ENCODE measurements at regions of chr13 and their contacts with region 1.

Region 1: GRCh38 chr13:95624020-95624419 is 20.5 kb downstream of the DZIP1 start:
- DNase-seq: peak; percentile 68
- H3K4me3 ChIP-seq: no peak overlapping the region
- H3K27ac ChIP-seq: no peak overlapping the region
- H3K4me1 ChIP-seq: no peaks in the 10 kb centered on the region
- H3K27me3 ChIP-seq: no peaks in the 10 kb centered on the region
- CTCF ChIP-seq: peak; percentile 67

Region 2: GRCh38 chr13:95982144-95982543 is 358.1 kb after region 1 on chr13:
- CTCF ChIA-PET with region 1: interaction called, 3 read pairs
- POLR2A ChIA-PET with region 1: no interaction called
- intact Hi-C with region 1: loop called (anchors 1 kb)
- DNase-seq: no peak
- H3K4me3 ChIP-seq: no peak overlapping the region
- H3K27ac ChIP-seq: no peak overlapping the region
- H3K4me1 ChIP-seq: no peaks in the 10 kb centered on the region
- H3K27me3 ChIP-seq: no peaks in the 10 kb centered on the region
- CTCF ChIP-seq: no peak

Region 3: GRCh38 chr13:96202315-96202714 is 578.3 kb after region 1 on chr13:
- CTCF ChIA-PET with region 1: no interaction called
- POLR2A ChIA-PET with region 1: no interaction called
- intact Hi-C with region 1: no loop called
- DNase-seq: no peak
- H3K4me3 ChIP-seq: no peak overlapping the region
- H3K27ac ChIP-seq: no peak overlapping the region
- H3K4me1 ChIP-seq: no peaks in the 10 kb centered on the region
- H3K27me3 ChIP-seq: no peaks in the 10 kb centered on the region
- CTCF ChIP-seq: no peak

Region 4: DNA sequence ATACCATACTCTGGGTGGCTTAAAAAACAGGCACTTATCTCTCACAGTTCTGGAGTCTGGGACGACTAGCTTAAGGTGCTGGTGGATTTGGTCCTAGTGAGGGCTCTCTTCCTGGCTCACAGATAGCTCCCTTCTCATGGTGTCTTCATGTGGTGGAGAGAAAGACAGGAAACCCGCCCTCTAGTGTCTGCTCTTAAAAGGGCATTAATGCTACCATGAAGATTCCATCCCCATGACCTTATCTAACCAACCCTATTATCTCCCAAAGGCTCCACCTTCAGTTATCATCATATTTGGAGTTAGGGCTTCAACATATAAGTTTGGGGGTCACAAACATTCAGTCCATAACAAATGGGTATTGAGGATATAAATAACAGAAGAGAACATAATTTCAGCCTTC is 605.3 kb after region 1 on chr13:
- CTCF ChIA-PET with region 1: interaction called, 3 read pairs
- POLR2A ChIA-PET with region 1: no interaction called
- intact Hi-C with region 1: loop called (anchors 10 kb)
- DNase-seq: peak; percentile 54
- H3K4me3 ChIP-seq: no peak overlapping the region
- H3K27ac ChIP-seq: no peak overlapping the region
- H3K4me1 ChIP-seq: no peaks in the 10 kb centered on the region
- H3K27me3 ChIP-seq: no peaks in the 10 kb centered on the region
- CTCF ChIP-seq: peak; percentile 68

Region 5: DNA sequence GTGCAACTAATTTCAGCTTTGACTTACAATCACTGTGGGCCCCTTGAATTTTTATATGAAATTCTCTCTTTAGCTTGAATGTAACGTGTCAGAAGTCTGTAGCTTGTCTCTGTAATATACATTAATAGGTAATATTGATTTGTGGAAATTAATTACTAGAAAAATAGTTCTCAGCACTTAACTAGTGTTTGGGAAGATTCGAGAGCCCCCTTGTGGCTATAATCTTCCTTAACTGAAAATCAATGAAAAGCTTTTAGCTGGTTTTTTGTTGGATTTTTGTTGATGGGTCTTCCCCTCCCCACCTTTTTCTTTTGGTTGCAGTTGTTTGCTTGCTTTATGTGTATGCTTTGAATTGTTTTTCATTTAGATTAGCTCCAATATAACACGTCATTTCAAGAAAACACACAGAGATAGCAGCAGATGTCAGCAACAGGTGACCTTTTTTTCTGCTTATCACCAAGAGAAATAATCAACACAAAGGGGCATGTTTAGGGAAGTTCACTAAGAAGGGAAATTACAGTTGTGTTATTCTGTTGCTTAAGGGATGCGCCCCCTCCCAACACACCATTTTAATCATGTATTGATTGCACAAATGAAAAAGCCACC is 1193.4 kb after region 1 on chr13:
- CTCF ChIA-PET with region 1: no interaction called
- POLR2A ChIA-PET with region 1: no interaction called
- intact Hi-C with region 1: loop called (anchors 10 kb)
- DNase-seq: peak; percentile 22
- H3K4me3 ChIP-seq: no peak overlapping the region
- H3K27ac ChIP-seq: no peak overlapping the region
- H3K4me1 ChIP-seq: no peaks in the 10 kb centered on the region
- H3K27me3 ChIP-seq: no peaks in the 10 kb centered on the region
- CTCF ChIP-seq: peak; percentile 66

Measured in A673 (cell line).